Activated T-helper 1 cell treated with anti-CD3 and anti-CD28 coated beads, Interleukin-12 subunit alpha, Interleukin-12 subunit beta, Interleukin-2, Interleukin-4 antibody, amounts not matched to agents 30 ng/mL and 10 ng/mL and 1 ng/mL, durations not matched to agents 14 hours and 24 hours and 36 hours (primary cell): ENCODE measurements at regions of chr7 and their contacts with region 1.

Region 1: DNA sequence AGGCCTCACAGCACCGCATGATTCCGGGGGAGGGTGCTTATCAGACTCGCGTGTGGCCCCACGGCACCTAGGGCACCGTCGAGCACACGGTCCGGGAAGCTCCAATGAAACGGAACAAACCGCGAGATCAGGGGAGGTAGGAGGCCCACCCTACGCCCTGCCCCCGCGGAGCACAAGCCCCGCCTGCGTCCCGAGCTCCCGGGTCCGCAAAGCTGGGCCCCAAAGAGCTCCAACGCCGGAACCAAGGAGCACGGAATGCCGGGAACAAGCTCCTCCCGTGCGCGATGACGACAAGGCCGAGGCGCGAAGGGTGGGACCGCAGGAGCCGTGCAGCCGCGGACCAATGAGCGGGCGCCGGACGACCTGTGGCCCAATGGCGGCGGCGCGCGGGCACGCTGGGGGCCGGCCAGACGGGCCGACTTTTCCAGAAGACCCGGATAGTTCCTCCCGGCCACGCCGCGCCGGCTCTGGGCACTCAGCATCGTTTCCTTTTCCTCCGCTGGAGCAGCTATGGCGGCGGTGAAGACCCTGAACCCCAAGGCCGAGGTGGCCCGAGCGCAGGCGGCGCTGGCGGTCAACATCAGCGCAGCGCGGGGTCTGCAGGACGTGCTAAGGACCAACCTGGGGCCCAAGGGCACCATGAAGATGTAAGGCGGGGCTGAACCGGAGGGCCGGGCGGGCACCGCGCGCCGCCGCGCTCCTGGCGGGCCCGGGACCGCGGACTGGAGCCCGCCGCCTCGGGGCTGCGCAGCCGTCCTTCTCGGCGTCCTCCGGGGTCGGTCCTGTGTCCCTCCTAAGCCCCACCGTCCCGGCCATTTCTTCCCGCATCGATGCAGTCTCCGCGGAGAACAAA is at the starts of genes CCT6A and PSPH:
- DNase-seq: peak; percentile 89
- H3K4me3 Mint-ChIP-seq: peak within 1 kb of the TSS; percentile 97
- H3K27ac Mint-ChIP-seq: peak within 1 kb of the TSS; percentile 95
- H3K4me1 Mint-ChIP-seq: peaks cover 46% of the 10 kb centered on the region
- H3K27me3 Mint-ChIP-seq: no peaks in the 10 kb centered on the region
- total RNA-seq, gene CCT6A: 308 TPM in 2 replicates
- total RNA-seq, gene PSPH: 17.3 and 19.3 TPM in 2 replicates

Region 2: GRCh38 chr7:55572378-55573233 is 479.0 kb before region 1 on chr7 and contains the start of gene VOPP1:
- intact Hi-C with region 1: loop called (anchors 5 kb)
- DNase-seq: peak; percentile 57
- H3K4me3 Mint-ChIP-seq: peak within 1 kb of the TSS; percentile 94
- H3K27ac Mint-ChIP-seq: peak within 1 kb of the TSS; percentile 92
- H3K4me1 Mint-ChIP-seq: peaks cover 68% of the 10 kb centered on the region
- H3K27me3 Mint-ChIP-seq: no peaks in the 10 kb centered on the region
- total RNA-seq, gene VOPP1: 96.3 and 102 TPM in 2 replicates

Region 3: GRCh38 chr7:55887821-55888247 is 163.7 kb before region 1 on chr7:
- intact Hi-C with region 1: loop called (anchors 1 kb)
- DNase-seq: no peak
- H3K4me3 Mint-ChIP-seq: peak overlapping the region; percentile 87
- H3K27ac Mint-ChIP-seq: peak overlapping the region; percentile 84
- H3K4me1 Mint-ChIP-seq: peaks cover 5% of the 10 kb centered on the region
- H3K27me3 Mint-ChIP-seq: peaks cover 2% of the 10 kb centered on the region

Region 4: DNA sequence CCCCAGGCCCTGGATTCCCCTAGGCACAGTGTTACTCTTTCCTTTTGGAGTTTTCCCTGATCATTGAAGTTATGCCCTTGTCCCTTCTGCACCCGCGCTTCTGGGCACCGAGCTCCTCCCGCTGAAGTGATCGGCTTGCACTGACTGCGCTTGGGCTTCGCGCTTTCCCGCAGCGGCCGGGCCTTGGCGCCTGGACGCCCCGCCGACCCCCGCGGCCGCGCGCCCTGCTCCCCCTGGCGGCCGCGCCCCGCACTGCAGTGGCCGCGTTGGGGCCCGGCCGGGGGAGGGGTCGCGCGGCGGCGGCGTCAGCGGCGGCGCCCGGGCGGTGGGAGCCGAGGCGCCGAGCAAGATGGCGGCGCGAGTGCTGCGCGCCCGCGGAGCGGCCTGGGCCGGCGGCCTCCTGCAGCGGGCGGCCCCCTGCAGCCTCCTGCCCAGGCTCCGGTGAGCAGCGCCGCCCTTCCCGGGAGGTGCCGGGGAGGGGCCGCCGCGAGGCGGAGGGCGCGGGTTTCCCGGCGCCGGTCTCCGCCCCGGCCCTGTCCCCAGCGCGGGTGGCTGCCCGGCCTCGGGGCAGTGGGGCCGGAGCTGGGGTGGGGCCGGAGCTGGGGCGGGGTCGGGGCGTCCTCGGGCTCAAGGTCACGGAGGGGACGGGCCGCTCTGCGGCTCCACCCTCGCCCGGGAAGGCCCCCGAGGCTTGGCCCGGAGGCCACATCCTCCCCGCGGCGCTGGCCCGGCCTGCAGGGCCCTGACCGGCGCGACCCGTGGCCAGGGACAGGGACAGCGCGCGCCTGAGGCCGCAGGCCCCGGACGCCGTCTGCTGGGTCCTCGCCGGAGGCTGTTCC is 87.1 kb before region 1 on chr7 and contains the start of gene NIPSNAP2:
- intact Hi-C with region 1: loop called (anchors 1 kb)
- DNase-seq: peak; percentile 55
- H3K4me3 Mint-ChIP-seq: peak within 1 kb of the TSS; percentile 88
- H3K27ac Mint-ChIP-seq: peak within 1 kb of the TSS; percentile 89
- H3K4me1 Mint-ChIP-seq: peaks cover 26% of the 10 kb centered on the region
- H3K27me3 Mint-ChIP-seq: no peaks in the 10 kb centered on the region
- total RNA-seq, gene NIPSNAP2: 49.4 and 50.0 TPM in 2 replicates

Region 5: GRCh38 chr7:56033671-56034432 is 17.7 kb before region 1 on chr7:
- intact Hi-C with region 1: loop called (anchors 1 kb)
- DNase-seq: peak; percentile 71
- H3K4me3 Mint-ChIP-seq: peak overlapping the region; percentile 92
- H3K27ac Mint-ChIP-seq: peak overlapping the region; percentile 87
- H3K4me1 Mint-ChIP-seq: peaks cover 15% of the 10 kb centered on the region
- H3K27me3 Mint-ChIP-seq: no peaks in the 10 kb centered on the region

Region 6: GRCh38 chr7:56106108-56107073 is 54.8 kb after region 1 on chr7 and contains the start of gene CHCHD2:
- intact Hi-C with region 1: loop called (anchors 1 kb)
- DNase-seq: peak; percentile 92
- H3K4me3 Mint-ChIP-seq: peak within 1 kb of the TSS; percentile 95
- H3K27ac Mint-ChIP-seq: peak within 1 kb of the TSS; percentile 94
- H3K4me1 Mint-ChIP-seq: peaks cover 21% of the 10 kb centered on the region
- H3K27me3 Mint-ChIP-seq: no peaks in the 10 kb centered on the region
- total RNA-seq, gene CHCHD2: 613 and 617 TPM in 2 replicates